ENCODE measurements at regions of chr11 and their contacts with region 1.

Region 1: GRCh38 chr11:45964911-45965389 is 42.5 kb downstream of the LARGE2 start:
- DNase-seq: peak; percentile 69
- ATAC-seq: peak; percentile 91
- H3K4me3 Mint-ChIP-seq: no peak overlapping the region
- H3K27ac Mint-ChIP-seq: no peak overlapping the region
- H3K4me1 Mint-ChIP-seq: no peaks in the 10 kb centered on the region
- H3K27me3 Mint-ChIP-seq: no peaks in the 10 kb centered on the region

Region 2: DNA sequence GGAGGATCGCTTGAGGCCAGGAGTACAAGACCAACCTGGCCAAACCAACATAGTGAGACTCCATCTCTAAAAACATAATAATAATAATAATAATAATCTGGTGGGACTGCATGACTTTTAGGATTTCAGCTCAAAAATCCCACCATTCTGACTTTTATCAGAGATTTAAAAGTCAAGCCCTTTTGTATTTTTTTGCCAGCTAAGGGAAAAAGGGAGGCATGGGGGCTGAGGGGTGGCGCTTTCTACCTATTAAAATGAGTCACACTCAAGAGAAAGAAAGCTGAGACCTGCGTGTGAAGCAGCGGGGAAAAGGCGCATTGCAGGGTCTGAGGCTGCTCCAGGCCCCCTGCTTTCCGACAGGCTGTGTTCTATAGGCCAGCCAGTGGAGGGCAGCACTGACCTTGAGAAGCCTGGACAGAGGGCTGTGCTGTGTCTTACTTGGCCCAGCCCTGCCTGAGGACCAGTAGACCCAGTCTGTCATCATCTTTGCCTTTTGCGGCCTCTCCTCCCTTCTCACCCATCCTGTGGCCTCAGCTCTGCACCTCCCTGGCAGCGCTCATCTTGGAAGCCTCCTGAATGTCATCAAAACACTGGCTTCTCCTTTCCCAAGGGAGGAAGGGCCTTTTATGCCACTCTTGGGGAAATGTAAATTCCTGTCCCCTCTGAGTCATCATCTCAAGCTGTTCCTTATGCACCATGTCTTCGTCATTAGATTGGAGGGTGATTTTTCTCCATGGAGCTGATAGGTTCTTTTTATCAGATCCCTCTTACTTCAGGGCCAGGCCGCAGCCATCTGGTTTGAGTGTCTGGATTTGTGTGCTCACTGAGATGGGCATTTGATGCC is 92.2 kb before region 1 on chr11:
- CTCF ChIA-PET with region 1: interaction called, 19 read pairs
- POLR2A ChIA-PET with region 1: no interaction called
- DNase-seq: peak; percentile 43
- ATAC-seq: peak; percentile 82
- H3K4me3 Mint-ChIP-seq: no peak overlapping the region
- H3K27ac Mint-ChIP-seq: no peak overlapping the region
- H3K4me1 Mint-ChIP-seq: no peaks in the 10 kb centered on the region
- H3K27me3 Mint-ChIP-seq: no peaks in the 10 kb centered on the region

Region 3: GRCh38 chr11:45930031-45930794 is 34.7 kb before region 1 on chr11:
- CTCF ChIA-PET with region 1: interaction called, 19 read pairs
- POLR2A ChIA-PET with region 1: no interaction called
- DNase-seq: peak; percentile 64
- ATAC-seq: peak; percentile 81
- H3K4me3 Mint-ChIP-seq: peak overlapping the region; percentile 38
- H3K27ac Mint-ChIP-seq: peak overlapping the region; percentile 87
- H3K4me1 Mint-ChIP-seq: peaks cover 40% of the 10 kb centered on the region
- H3K27me3 Mint-ChIP-seq: no peaks in the 10 kb centered on the region

Region 4: DNA sequence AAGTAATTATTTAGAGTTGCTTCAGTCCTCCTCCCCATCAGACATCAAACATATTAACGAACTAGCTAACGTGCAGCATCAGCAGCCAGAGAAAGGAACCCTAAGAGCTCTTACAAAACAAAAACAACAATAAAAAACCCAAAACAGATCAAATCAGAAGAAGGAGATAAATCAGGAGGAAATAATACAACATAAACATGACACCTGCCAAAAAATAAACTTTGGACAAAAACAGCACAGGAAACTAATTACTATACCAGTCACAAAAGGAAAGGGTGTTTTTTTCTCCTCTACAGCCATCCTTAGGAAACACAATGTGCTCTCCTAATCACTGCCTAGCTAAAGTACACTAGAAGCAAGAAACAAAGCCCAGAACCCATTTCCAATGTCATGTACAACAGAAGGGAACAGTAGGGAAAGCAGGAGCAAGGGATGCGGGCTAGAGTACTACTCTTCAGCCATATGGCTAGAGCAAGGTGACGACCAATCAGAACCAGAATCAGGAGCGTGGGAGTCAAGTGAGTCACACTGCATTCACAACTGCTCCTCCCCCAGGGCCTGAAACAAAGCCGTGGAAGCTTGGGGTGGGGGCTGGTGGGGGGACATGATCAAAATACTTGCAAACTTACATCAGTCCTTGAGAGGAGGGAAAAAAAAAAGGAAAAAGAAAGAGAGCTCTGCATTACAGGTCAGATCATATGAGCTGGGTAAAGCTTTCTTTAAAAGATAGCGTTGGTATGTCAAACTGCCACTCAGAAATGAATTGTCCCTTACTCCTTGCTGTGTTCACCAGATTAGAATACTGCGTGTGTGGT is 17.9 kb after region 1 on chr11:
- CTCF ChIA-PET with region 1: interaction called, 32 read pairs
- POLR2A ChIA-PET with region 1: interaction called, 4 read pairs
- DNase-seq: no peak
- ATAC-seq: no peak
- H3K4me3 Mint-ChIP-seq: no peak overlapping the region
- H3K27ac Mint-ChIP-seq: no peak overlapping the region
- H3K4me1 Mint-ChIP-seq: peaks cover 6% of the 10 kb centered on the region
- H3K27me3 Mint-ChIP-seq: no peaks in the 10 kb centered on the region

Region 5: DNA sequence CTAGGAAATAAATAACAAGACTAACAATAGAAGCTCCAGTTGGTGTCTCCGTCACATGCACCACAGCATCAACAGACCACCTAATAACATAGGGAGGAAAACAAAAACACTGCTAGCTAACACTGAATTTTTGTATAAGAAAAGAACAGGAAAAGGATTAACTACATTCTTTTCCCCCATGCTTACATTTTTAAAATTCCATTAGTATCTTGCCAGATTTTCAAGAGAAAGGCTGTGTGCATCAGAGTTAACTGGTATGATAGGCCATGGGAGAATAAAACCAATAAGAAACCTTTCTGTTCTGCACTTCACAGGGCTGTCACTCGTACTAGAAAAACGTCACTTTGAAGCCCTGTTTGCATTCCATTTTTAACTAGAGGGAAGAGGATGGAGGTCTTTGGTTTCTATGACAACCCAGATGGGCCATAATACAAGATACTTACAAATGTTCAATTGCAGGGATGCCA is 36.5 kb after region 1 on chr11:
- CTCF ChIA-PET with region 1: interaction called, 83 read pairs
- POLR2A ChIA-PET with region 1: no interaction called
- DNase-seq: no peak
- ATAC-seq: no peak
- H3K4me3 Mint-ChIP-seq: no peak overlapping the region
- H3K27ac Mint-ChIP-seq: no peak overlapping the region
- H3K4me1 Mint-ChIP-seq: no peaks in the 10 kb centered on the region
- H3K27me3 Mint-ChIP-seq: no peaks in the 10 kb centered on the region

Region 6: DNA sequence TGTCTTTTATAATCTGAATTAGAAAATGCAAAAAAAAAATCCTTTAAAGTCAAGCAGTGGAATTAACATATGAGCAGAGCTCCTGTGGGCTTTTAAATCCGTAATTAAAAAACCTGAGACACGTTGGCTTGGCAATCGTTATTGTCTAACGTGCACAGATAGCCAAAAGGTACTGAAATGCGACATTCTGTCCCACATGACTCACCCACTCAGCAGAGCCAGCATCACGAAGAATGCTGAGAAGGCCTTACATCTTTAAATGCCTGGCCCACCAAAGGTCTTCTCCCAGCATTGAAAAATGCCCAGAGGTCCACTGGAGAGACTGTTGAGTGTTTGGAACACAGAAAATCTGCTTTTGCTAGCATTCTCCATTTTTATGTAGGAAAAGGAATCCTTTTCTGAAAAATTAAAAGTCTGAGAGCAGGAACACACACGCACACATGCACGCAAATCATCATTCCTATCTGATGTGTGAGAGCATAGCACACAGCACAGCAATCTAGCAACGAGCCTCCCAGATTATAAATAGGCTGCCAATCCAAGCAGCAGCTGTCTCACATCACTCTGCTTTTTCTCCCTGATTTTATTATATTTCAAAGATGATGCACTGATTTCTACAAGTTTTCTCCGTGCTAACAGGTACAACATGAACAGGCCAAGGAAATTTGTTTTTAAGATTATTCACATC is 61.8 kb after region 1 on chr11:
- CTCF ChIA-PET with region 1: interaction called, 10 read pairs
- POLR2A ChIA-PET with region 1: no interaction called
- DNase-seq: no peak
- ATAC-seq: no peak
- H3K4me3 Mint-ChIP-seq: no peak overlapping the region
- H3K27ac Mint-ChIP-seq: no peak overlapping the region
- H3K4me1 Mint-ChIP-seq: no peaks in the 10 kb centered on the region
- H3K27me3 Mint-ChIP-seq: no peaks in the 10 kb centered on the region

Region 7: GRCh38 chr11:46114961-46115360 is 150.0 kb after region 1 on chr11:
- CTCF ChIA-PET with region 1: interaction called, 12 read pairs
- POLR2A ChIA-PET with region 1: no interaction called
- DNase-seq: no peak
- ATAC-seq: no peak
- H3K4me3 Mint-ChIP-seq: no peak overlapping the region
- H3K27ac Mint-ChIP-seq: peak overlapping the region; percentile 16
- H3K4me1 Mint-ChIP-seq: peaks cover 61% of the 10 kb centered on the region
- H3K27me3 Mint-ChIP-seq: no peaks in the 10 kb centered on the region

Measured in activated CD8-positive, alpha-beta T cell treated with anti-CD3 and anti-CD28 coated beads, Interleukin-2, amount 10 ng/mL, durations not matched to agents 7 days and 5 days (primary cell).